Activated B cell treated with CpG ODN at 0.5 μM for 24 hours (primary cell): ENCODE measurements at regions of chr2 and their contacts with region 1.

Region 1: DNA sequence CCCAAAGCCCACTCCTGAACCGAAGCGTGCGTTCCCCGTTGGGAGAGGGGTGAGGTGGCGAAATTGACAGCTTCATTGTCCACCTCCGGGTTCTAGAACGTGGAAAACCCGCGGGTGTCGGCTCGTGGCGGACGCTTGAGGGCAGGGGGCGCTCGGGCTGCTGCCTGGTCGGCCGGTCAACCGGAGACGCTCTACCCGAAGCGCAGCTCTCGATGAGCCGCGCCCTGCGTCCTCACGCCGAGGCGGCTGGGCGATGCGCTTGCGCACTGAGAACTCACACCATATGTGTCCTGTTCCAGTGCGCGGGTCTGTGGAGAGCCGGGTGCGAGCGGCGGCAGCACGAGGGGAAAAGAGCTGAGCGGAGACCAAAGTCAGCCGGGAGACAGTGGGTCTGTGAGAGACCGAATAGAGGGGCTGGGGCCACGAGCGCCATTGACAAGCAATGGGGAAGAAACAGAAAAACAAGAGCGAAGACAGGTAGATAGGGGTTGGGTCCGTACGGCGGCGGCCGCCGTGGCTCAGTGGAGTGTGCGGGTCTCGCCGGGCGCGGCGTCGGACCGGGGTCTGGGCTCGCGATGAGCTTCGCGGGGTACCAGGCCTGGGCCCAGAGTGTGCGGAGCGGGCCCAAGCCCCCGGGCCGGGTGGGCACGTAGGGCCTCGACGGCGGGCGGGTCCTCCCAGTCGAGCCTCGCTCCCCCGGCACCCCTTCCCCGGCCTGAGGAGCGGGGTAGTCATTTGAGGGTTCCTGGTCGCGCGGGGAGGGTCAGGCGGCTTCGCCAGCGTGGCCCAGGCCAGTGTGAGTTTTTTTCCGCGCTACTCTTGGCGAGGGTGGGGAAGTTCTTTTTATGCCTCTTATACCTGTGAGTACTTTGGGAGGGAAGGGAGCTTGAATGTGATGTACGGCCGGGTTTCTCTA is at the start of gene EIF5B:
- DNase-seq: peak; percentile 92
- ATAC-seq: peak; percentile 69
- H3K4me3 Mint-ChIP-seq: no peak within 1 kb of the TSS
- H3K27ac Mint-ChIP-seq: no peak within 1 kb of the TSS
- H3K4me1 Mint-ChIP-seq: peaks cover 28% of the 10 kb centered on the region
- H3K27me3 Mint-ChIP-seq: no peaks in the 10 kb centered on the region
- CTCF ChIP-seq: no peak
- total RNA-seq, gene EIF5B: 52.3 and 55.0 TPM in 2 replicates

Region 2: DNA sequence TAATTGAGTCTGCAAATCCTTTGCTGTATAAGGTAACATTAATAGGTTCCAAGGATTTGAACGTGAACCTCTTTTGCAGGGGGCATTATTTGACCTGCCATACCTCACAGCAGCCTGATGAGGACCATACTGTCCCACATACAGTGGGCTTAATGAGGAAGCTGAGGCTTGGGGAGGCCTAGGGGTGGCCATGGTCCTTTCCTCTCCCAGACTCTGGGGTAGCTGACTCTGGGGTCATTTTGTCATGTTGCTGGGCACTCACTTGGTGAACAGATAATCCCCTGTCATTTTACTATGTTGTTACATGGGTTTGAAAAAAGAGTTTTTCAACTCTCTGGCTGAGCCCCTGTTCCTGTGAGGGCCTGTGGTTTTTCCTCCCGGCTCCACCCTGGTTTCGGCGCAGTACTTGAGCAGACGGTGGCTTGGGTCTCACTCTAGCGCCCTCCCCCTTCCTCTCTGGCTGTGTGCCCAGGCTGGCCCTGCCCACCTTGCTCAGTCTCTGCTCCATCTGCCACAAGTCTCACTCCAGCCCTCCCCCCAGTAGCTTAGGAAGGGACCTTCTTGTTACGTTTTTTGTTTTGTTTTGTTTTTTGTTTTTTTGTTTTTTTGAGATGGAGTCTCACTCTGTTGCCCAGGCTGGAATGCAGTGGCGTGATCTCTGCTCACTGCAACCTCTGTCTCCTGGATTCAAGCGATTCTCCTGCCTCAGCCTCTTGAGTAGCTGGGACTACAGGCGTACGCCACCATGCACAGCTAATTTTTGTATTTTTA is 871.7 kb before region 1 on chr2:
- CTCF ChIA-PET with region 1: no interaction called
- POLR2A ChIA-PET with region 1: no interaction called
- intact Hi-C with region 1: loop called (anchors 5 kb)
- DNase-seq: no peak
- ATAC-seq: peak; percentile 13
- H3K4me3 Mint-ChIP-seq: peak overlapping the region; percentile 56
- H3K27ac Mint-ChIP-seq: peak overlapping the region; percentile 94
- H3K4me1 Mint-ChIP-seq: peaks cover 70% of the 10 kb centered on the region
- H3K27me3 Mint-ChIP-seq: no peaks in the 10 kb centered on the region
- CTCF ChIP-seq: no peak

Region 3: DNA sequence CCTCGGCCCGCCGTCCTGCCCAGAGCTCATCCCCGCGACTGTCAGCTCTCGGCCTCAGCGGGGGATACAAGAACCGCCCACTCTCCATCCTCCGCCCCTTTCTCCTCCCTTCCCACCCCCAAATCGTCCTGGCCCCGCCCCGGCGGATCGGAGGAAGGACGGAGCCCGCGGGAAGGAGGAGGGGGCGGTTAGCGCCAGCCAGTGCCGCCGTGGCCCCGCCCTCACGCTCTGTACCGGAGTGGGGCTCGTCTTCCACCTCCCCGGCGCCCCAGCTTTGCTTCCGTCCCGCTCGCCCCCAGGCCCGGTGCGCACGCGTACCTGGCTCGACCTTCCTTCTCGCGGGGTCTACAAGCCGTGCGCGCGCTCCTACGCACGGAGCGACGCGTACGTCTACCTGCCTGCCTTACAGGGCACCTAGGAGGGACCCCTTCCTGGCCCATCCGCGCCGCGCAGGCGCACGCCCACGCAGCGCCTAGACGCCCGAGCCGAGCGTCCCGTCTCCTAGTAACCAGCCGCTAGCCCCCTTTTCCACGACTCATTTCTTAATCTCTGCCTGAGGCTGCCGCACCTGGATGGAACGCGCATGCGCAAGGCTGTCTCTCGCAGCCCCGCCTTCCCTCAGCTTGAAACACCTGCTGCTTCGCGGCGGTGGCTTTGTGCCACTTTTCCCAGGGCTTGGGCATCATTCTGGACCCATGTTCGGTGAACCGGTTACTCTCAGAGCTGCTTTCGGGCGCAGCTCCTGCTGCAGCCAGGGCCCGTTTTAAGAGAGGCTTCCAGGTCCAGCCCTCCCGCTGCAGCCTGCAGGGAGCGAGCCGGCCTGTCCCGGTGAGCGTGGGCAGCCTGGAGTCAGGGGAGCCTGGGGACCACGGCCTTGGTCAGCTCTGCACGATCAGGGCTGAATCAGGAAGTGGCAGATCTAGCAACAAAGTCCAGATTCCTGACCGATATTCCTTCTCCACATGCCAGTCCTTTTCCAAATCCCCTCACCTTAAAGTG is 196.0 kb before region 1 on chr2 and contains the start of gene C2orf15:
- CTCF ChIA-PET with region 1: interaction called, 3 read pairs
- POLR2A ChIA-PET with region 1: interaction called, 26 read pairs
- intact Hi-C with region 1: loop called (anchors 1 kb)
- DNase-seq: peak; percentile 96
- ATAC-seq: peak; percentile 88
- H3K4me3 Mint-ChIP-seq: peak within 1 kb of the TSS; percentile 97
- H3K27ac Mint-ChIP-seq: peak within 1 kb of the TSS; percentile 96
- H3K4me1 Mint-ChIP-seq: peaks cover 26% of the 10 kb centered on the region
- H3K27me3 Mint-ChIP-seq: no peaks in the 10 kb centered on the region
- CTCF ChIP-seq: no peak
- total RNA-seq, gene C2orf15: 0.69 and 1.2 TPM in 2 replicates

Region 4: DNA sequence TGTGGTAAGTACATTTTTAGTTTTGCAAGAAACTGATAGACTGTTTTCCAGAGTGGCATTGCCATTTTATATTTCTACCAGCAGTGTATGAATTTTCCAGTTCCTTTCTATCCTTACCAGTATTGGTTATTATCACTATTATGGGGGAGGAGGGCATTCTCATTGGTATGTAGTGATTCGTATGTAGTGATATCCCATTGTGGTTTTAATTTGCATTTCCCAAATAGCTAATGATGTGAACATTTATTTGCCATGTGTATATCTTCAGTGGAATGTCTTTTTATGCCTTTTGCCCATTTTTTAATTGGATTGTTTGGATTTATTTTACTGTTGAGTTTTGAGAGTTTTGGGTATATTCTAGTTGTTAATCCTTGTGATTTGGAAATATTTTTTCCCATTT is 16.7 kb after region 1 on chr2:
- CTCF ChIA-PET with region 1: no interaction called
- POLR2A ChIA-PET with region 1: interaction called, 12 read pairs
- intact Hi-C with region 1: no loop called
- DNase-seq: no peak
- ATAC-seq: no peak
- H3K4me3 Mint-ChIP-seq: no peak overlapping the region
- H3K27ac Mint-ChIP-seq: no peak overlapping the region
- H3K4me1 Mint-ChIP-seq: peaks cover 63% of the 10 kb centered on the region
- H3K27me3 Mint-ChIP-seq: no peaks in the 10 kb centered on the region
- CTCF ChIP-seq: no peak

Region 5: DNA sequence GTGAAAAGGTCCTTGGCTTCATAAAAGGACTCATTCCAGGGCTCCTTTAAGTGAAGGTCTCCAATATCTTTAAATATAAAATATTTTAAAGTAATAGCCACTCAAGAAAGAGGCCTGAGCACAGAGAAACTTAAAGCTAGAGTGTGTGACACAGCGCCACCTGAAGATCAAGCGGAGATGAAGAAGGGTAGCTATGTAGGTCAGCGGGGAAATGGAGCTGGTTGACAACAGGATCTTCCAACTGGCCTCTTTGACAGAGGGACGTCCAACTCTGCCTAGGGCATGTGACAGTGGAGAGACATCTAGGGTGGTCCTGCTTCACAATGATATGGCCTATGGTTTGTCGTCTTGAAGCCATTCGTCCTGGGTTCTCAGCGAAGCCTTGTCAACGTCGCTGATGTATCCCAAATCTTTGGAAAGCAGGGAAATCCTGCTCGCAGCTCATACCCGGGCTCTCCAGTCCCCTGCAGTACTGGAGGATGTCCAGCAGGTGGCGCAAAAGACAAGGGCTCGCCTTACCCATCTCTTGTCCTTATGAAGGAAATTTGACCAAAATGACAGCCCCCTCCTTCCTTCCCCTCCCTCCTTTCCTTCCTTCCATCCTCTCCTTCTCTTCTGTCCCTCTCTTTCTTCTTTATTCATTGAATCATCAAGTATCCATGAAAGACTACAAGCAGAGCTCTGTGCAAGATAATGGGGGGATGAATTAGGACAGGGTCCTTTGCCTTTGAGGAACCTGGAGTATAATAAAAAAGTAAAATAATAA is 925.4 kb after region 1 on chr2:
- CTCF ChIA-PET with region 1: no interaction called
- POLR2A ChIA-PET with region 1: no interaction called
- intact Hi-C with region 1: loop called (anchors 5 kb)
- DNase-seq: peak; percentile 51
- ATAC-seq: peak; percentile 76
- H3K4me3 Mint-ChIP-seq: no peak overlapping the region
- H3K27ac Mint-ChIP-seq: no peak overlapping the region
- H3K4me1 Mint-ChIP-seq: peaks cover 8% of the 10 kb centered on the region
- H3K27me3 Mint-ChIP-seq: no peaks in the 10 kb centered on the region
- CTCF ChIP-seq: peak; percentile 92

Region 6: DNA sequence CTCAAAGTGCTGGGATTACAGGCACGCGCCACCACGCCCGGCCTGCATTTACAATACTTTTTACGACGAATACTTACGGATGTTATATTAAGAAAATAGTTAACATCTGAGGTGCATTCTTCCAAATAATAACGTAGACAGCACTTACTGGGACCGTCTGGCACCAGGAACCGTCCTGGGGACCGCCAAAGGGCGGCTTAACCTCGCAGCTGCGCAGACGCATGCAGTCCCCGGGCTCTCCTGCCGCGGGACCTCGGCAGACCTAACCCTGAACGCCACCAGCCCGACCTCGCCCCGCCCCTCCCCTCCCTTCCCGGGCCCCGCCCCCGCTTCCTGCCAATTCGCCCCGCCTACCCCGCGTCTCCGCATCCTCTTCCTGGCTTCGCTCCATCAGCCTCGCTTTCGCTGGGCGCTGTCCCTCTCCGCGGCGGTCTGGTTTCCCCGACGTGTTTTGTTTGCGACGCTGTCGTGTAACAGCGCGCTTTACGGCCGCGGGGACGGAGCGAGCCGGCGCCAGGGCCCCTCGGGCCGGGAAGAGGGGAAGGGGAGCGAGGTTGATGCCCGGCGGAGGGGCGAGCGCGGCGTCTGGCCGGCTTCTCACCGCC is 1915.1 kb after region 1 on chr2 and contains the start of gene CNOT11:
- CTCF ChIA-PET with region 1: no interaction called
- POLR2A ChIA-PET with region 1: no interaction called
- intact Hi-C with region 1: loop called (anchors 2 kb)
- DNase-seq: peak; percentile 98
- ATAC-seq: peak; percentile 86
- H3K4me3 Mint-ChIP-seq: peak within 1 kb of the TSS; percentile 91
- H3K27ac Mint-ChIP-seq: peak within 1 kb of the TSS; percentile 94
- H3K4me1 Mint-ChIP-seq: peaks cover 41% of the 10 kb centered on the region
- H3K27me3 Mint-ChIP-seq: no peaks in the 10 kb centered on the region
- CTCF ChIP-seq: no peak
- total RNA-seq, gene CNOT11: 50.8 and 59.7 TPM in 2 replicates